A673 (cell line): ENCODE measurements at regions of chr20 and their contacts with region 1.

Region 1: GRCh38 chr20:47379433-47380150 is 23.1 kb upstream of the ZMYND8 start:
- DNase-seq: no peak
- H3K4me3 ChIP-seq: no peak overlapping the region
- H3K27ac ChIP-seq: no peak overlapping the region
- H3K4me1 ChIP-seq: peaks cover 3% of the 10 kb centered on the region
- H3K27me3 ChIP-seq: no peaks in the 10 kb centered on the region
- CTCF ChIP-seq: no peak

Region 2: DNA sequence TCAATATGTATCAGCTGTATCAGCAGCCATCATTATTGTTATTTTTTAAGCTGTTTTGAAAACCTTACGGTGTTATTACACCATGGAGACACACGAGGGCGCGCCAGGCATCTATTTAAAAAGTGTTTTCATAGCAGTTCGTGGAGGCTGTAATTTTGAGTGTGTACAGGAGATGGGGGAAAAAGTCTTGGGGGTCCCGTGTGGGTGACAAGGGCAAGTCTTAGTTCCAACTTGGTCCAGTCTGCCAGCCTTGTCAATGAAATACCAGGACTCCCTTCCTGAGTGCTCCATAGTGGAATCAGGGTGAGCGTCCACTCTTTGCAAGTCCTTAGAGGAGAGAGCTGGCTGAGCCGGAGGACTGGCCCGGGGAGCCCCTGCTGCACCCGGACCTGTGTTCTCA is 626.9 kb before region 1 on chr20:
- CTCF ChIA-PET with region 1: interaction called, 3 read pairs
- POLR2A ChIA-PET with region 1: no interaction called
- intact Hi-C with region 1: loop called (anchors 5 kb)
- DNase-seq: peak; percentile 67
- H3K4me3 ChIP-seq: no peak overlapping the region
- H3K27ac ChIP-seq: no peak overlapping the region
- H3K4me1 ChIP-seq: no peaks in the 10 kb centered on the region
- H3K27me3 ChIP-seq: peaks cover 11% of the 10 kb centered on the region
- CTCF ChIP-seq: peak; percentile 77

Region 3: DNA sequence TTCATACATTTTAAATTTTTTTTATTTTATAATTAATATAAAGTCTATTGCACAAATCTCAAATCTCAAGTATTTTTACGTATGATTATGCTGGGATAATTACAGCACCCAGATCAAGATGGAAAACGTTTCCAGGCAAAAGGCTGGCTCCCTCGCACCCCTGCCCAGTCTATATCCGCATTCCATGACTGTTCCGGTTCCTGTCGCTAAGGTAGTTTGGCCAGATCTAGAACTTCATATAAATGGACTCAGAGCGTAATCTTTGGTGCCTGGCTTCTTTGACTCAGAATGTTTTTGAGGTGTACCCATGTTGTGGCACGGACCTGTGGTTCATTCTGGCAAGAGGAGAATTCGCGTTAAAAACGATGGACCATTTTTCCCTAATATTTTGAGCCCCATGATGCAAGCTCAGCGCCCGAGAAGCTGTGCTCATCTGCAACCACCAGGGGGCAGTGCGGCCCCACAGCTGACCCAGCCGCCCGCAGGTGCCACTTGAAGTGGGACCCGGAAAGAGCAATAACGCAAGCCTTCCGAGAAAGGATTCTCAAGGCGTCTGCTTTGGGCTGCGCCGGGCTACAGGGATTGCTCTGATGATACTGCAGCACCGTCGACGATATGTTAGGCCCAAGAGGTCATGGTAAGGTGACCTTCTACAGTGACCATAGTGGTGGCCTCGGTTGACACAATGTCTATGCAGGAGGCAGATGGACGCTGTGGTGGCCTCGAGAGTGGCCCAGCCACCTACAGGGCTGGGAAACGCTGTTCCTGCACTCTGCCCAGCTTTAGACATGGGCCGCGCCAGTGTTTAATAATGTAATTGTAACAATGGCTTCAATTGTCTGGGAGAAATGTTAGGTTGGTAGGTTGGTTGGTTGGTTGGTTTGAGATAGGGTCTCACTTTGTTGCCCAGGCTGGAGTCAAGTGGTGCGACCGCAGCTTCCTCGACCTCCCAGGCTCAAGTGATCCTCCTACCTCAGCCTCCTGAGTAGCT is 183.2 kb before region 1 on chr20:
- CTCF ChIA-PET with region 1: interaction called, 19 read pairs
- POLR2A ChIA-PET with region 1: no interaction called
- intact Hi-C with region 1: loop called (anchors 2 kb)
- DNase-seq: peak; percentile 83
- H3K4me3 ChIP-seq: no peak overlapping the region
- H3K27ac ChIP-seq: no peak overlapping the region
- H3K4me1 ChIP-seq: no peaks in the 10 kb centered on the region
- H3K27me3 ChIP-seq: no peaks in the 10 kb centered on the region
- CTCF ChIP-seq: peak; percentile 98

Region 4: DNA sequence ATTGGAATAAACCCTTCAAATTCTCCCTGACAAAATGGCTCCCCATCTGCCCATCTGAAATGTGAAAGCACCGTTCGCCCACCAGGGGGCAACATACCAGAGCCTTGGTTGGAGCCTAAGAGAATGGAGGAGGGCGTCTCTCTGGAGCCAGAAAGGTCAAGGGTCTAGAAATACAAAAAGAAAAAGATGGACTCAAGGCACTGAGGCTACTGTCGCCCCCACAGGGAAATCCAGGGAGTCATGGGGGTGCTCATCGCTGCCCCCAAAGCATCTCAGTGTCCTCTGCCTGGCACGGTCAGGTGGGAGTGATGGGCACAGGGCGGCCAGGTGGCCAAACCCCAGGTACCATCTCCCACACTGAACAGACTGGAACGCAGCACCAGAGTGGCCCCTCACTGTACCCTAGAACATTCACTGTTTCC is 159.4 kb before region 1 on chr20:
- CTCF ChIA-PET with region 1: interaction called, 4 read pairs
- POLR2A ChIA-PET with region 1: no interaction called
- intact Hi-C with region 1: loop called (anchors 1 kb)
- DNase-seq: peak; percentile 65
- H3K4me3 ChIP-seq: no peak overlapping the region
- H3K27ac ChIP-seq: no peak overlapping the region
- H3K4me1 ChIP-seq: no peaks in the 10 kb centered on the region
- H3K27me3 ChIP-seq: no peaks in the 10 kb centered on the region
- CTCF ChIP-seq: peak; percentile 83

Region 5: GRCh38 chr20:47272893-47273590 is 106.5 kb before region 1 on chr20:
- CTCF ChIA-PET with region 1: interaction called, 87 read pairs
- POLR2A ChIA-PET with region 1: no interaction called
- intact Hi-C with region 1: loop called (anchors 1 kb)
- DNase-seq: peak; percentile 74
- H3K4me3 ChIP-seq: no peak overlapping the region
- H3K27ac ChIP-seq: no peak overlapping the region
- H3K4me1 ChIP-seq: peaks cover 13% of the 10 kb centered on the region
- H3K27me3 ChIP-seq: no peaks in the 10 kb centered on the region
- CTCF ChIP-seq: peak; percentile 83

Region 6: DNA sequence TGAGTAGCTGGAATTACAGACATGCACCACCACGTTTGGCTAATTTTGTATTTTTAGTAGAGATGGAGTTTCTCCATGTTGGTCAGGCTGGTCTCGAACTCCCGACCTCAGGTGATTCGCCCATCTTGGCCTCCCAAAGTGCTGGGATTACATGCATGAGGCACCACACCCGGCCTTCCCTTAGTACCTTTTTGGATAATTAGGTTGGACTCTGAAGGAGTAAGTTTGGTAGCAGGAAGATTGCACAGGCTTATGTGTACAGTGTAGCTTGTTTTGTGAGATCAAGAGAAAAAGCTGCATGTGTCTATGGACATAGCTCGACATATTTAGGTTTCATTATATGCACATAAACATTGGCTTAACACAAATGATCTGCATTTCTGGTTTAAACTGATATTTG is 238.9 kb after region 1 on chr20:
- CTCF ChIA-PET with region 1: interaction called, 9 read pairs
- POLR2A ChIA-PET with region 1: no interaction called
- intact Hi-C with region 1: loop called (anchors 5 kb)
- DNase-seq: no peak
- H3K4me3 ChIP-seq: no peak overlapping the region
- H3K27ac ChIP-seq: no peak overlapping the region
- H3K4me1 ChIP-seq: peaks cover 3% of the 10 kb centered on the region
- H3K27me3 ChIP-seq: no peaks in the 10 kb centered on the region
- CTCF ChIP-seq: no peak

Region 7: DNA sequence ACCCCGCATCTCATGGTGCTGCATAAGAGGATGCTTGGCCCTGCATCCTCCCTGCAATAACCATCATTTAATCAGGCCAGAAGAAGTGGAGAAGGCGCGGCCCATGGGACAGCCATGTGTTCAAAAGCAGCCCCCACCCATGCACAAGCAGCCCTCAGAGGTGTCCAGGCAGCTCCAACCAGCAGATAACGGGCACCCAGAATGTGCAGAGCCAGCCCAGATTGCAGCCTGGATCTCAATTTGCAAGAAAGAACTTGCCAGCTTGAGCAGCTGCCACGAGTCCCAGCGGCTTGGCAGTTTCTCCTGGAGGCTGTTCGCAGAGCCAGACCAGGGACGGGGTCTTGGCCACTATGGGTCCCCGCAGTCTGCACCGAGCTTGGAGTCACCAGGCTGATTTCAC is 467.0 kb after region 1 on chr20:
- CTCF ChIA-PET with region 1: no interaction called
- POLR2A ChIA-PET with region 1: no interaction called
- intact Hi-C with region 1: no loop called
- DNase-seq: no peak
- H3K4me3 ChIP-seq: no peak overlapping the region
- H3K27ac ChIP-seq: no peak overlapping the region
- H3K4me1 ChIP-seq: no peaks in the 10 kb centered on the region
- H3K27me3 ChIP-seq: peaks cover 4% of the 10 kb centered on the region
- CTCF ChIP-seq: no peak